ENCODE measurements at regions of chr17 and their contacts with region 1.

Region 1: DNA sequence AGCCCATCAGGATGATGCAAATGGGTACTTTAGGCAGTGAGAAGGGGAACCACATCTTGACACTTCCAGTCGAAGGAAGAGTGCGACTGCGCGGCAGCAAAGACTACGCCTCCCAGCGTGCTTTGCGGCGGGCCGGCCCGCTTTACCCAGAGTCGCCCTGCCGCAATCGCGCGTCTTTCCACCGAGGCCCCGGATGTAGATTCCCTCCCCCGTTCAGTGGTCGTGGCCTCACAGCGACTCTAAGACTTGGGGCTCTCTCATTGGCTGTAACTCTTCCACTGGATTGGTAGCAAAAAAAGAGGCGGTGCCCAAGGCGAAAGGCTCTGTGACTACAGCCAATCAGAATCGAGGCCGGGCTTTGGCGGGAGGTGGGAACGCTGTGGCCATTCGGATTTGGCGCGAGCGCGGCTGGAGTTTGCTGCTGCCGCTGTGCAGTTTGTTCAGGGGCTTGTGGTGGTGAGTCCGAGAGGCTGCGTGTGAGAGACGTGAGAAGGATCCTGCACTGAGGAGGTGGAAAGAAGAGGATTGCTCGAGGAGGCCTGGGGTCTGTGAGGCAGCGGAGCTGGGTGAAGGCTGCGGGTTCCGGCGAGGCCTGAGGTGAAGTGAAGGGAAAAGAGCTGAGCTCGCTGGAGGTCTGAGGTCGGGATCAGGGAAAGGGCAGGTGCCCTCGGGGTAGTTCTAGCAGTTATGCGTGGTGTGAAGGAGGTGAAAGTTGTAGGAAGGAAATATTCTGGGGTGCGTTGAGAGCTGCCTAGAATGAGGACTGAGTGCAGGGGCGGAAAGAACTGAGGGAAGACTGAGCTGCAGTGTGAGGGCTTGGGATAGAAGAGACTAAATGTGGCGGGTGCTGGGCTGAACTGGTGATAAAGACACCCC is at the start of gene CDC6:
- DNase-seq: peak; percentile 100
- H3K4me3 Mint-ChIP-seq: peak within 1 kb of the TSS; percentile 83
- H3K27ac Mint-ChIP-seq: peak within 1 kb of the TSS; percentile 90
- H3K4me1 Mint-ChIP-seq: peaks cover 71% of the 10 kb centered on the region
- H3K27me3 Mint-ChIP-seq: no peaks in the 10 kb centered on the region
- CTCF ChIP-seq: no peak
- total RNA-seq, gene CDC6: 567 and 645 TPM in 2 replicates

Region 2: GRCh38 chr17:39687811-39688518 is 599.8 kb before region 1 on chr17 and contains the start of gene PGAP3:
- CTCF ChIA-PET with region 1: interaction called, 3 read pairs
- intact Hi-C with region 1: loop called (anchors 5 kb)
- DNase-seq: peak; percentile 100
- H3K4me3 Mint-ChIP-seq: peak within 1 kb of the TSS; percentile 64
- H3K27ac Mint-ChIP-seq: peak within 1 kb of the TSS; percentile 63
- H3K4me1 Mint-ChIP-seq: peaks cover 27% of the 10 kb centered on the region
- H3K27me3 Mint-ChIP-seq: no peaks in the 10 kb centered on the region
- CTCF ChIP-seq: no peak
- total RNA-seq, gene PGAP3: 1,186 and 1,276 TPM in 2 replicates

Region 3: DNA sequence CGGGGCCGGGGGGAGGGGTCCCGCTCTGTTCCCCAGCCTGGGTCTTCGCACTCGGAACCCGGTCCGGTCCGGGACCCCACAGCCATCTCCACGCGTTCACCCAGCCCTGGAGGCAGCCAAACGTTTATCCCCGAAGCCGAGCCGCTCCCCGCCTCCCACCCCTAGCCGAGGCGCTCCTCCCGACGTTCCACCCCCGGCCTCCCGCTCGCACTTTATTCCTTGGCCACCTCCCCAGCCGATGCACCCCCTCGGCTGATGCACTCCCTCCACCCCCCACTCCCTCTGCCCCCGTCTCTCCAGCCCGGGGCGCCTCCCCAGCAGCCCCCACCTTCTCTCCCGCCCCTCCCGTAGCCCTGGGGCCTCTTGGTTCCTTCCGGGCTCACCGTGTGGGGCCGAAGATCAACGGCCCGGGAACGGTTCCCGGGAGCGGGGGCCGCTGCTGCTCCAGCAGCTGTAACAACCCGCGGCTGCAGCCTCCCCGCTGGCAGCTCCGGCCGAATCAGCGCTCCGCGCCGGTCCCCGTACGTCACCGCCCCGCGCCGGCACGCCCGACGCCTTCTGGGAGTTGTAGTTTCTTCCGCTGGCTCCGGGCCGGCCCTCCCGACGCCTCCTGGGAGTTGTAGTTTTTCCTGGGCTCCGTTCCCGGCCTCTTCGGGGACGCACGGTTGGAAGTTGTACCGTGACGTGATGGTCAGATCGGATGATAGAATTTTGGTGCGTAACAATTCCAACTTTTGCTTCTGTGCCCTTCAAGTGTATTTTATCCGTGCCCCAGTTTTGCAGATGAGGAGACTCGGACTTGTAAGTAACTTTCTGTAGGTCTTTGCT is 360.4 kb before region 1 on chr17 and contains the starts of genes LRRC3C and ORMDL3:
- CTCF ChIA-PET with region 1: interaction called, 8 read pairs
- intact Hi-C with region 1: loop called (anchors 10 kb)
- DNase-seq: no peak
- H3K4me3 Mint-ChIP-seq: peak within 1 kb of the TSS; percentile 74
- H3K27ac Mint-ChIP-seq: peak within 1 kb of the TSS; percentile 66
- H3K4me1 Mint-ChIP-seq: peaks cover 60% of the 10 kb centered on the region
- H3K27me3 Mint-ChIP-seq: no peaks in the 10 kb centered on the region
- CTCF ChIP-seq: no peak
- total RNA-seq, gene LRRC3C: not detected in 2 replicates
- total RNA-seq, gene ORMDL3: 1,738 and 1,968 TPM in 2 replicates

Region 4: DNA sequence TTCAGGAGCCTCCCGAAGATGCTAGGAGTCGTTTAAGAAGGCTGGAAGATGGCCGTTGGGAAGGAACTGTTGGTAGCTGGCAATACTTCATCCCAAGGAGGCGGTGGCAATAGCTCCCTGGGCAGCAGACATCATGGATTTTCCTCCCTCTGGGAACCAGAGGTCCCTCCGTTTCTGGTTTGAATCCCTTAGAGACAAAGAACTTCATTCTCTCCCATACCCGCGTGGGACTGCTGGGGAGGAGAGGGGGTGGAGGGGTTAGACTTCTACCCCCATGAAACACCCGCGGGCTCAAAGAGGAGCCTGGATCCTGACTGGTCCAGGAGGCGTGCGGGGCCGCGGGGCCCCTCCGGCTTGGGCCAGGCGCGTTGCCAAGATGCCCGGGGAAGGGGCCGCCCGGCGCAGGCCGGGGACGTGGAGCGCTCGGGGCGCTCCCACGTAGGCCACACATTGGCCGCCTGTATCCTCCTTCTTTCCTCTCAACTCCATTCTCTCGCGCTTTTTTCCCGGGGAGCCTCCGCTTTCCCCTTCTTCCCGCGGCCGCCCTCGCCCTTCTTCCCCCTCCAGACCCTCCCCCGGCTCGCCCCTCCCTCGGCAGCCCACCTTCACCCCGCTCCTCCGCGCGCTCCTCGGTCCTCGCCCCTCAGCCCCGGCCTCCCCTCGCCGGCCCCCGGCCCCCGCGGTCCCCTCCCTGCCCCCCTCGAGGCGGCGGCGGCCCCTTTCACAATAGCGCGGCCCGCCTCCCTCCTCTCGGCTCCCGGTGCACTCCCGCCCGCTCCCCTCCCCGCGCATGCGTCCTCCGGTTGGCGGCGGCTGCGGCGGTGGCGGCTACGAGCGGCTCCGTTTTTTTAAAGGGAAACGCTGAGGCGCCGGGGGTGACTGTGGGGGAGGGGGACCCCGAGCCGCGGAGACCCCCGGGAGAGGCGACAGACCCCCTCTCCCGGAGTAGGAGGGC is 166.3 kb before region 1 on chr17 and contains the start of gene MSL1:
- CTCF ChIA-PET with region 1: interaction called, 14 read pairs
- intact Hi-C with region 1: no loop called
- DNase-seq: peak; percentile 100
- H3K4me3 Mint-ChIP-seq: peak within 1 kb of the TSS; percentile 86
- H3K27ac Mint-ChIP-seq: peak within 1 kb of the TSS; percentile 53
- H3K4me1 Mint-ChIP-seq: peaks cover 48% of the 10 kb centered on the region
- H3K27me3 Mint-ChIP-seq: no peaks in the 10 kb centered on the region
- CTCF ChIP-seq: no peak
- total RNA-seq, gene MSL1: 505 and 524 TPM in 2 replicates

Region 5: GRCh38 chr17:40209404-40210093 is 78.2 kb before region 1 on chr17:
- CTCF ChIA-PET with region 1: interaction called, 31 read pairs
- intact Hi-C with region 1: no loop called
- DNase-seq: no peak
- H3K4me3 Mint-ChIP-seq: no peak overlapping the region
- H3K27ac Mint-ChIP-seq: no peak overlapping the region
- H3K4me1 Mint-ChIP-seq: no peaks in the 10 kb centered on the region
- H3K27me3 Mint-ChIP-seq: no peaks in the 10 kb centered on the region
- CTCF ChIP-seq: no peak

Region 6: GRCh38 chr17:40264458-40265185 is 23.1 kb before region 1 on chr17:
- CTCF ChIA-PET with region 1: interaction called, 142 read pairs
- intact Hi-C with region 1: loop called (anchors 1 kb)
- DNase-seq: no peak
- H3K4me3 Mint-ChIP-seq: no peak overlapping the region
- H3K27ac Mint-ChIP-seq: no peak overlapping the region
- H3K4me1 Mint-ChIP-seq: no peaks in the 10 kb centered on the region
- H3K27me3 Mint-ChIP-seq: no peaks in the 10 kb centered on the region
- CTCF ChIP-seq: no peak

Region 7: DNA sequence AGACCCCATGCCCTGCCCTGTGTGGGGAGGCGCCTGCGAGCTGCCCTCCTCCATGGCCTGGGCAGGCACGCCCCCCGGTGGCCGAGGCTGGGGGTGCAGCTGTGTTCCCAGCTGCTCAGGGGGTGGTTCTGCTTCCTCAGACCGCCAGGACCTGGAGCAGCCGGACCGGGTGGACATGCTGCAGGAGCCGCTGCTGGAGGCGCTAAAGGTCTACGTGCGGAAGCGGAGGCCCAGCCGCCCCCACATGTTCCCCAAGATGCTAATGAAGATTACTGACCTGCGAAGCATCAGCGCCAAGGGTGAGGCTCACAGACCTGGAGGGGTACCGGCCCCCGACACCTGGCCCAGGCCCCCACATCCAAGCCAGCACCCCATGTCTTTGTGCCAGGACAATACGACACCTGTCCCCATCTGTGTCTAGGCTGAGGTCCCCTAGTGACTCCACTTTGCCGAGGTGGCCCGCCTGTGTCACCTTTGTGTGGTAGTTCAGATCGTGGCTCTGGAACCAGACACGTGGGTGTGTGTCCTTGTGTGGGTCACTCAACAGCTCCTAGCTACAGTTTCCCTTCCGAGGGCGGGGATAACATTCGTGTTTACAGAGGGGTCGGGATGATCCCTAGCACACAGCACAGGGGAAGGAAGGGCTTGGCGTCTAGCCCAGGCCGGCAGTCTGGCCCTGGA is 67.5 kb after region 1 on chr17:
- CTCF ChIA-PET with region 1: interaction called, 19 read pairs
- intact Hi-C with region 1: no loop called
- DNase-seq: peak; percentile 100
- H3K4me3 Mint-ChIP-seq: no peak overlapping the region
- H3K27ac Mint-ChIP-seq: no peak overlapping the region
- H3K4me1 Mint-ChIP-seq: peaks cover 29% of the 10 kb centered on the region
- H3K27me3 Mint-ChIP-seq: no peaks in the 10 kb centered on the region
- CTCF ChIP-seq: no peak

Region 8: GRCh38 chr17:40469805-40470675 is 182.3 kb after region 1 on chr17:
- CTCF ChIA-PET with region 1: no interaction called
- intact Hi-C with region 1: no loop called
- DNase-seq: no peak
- H3K4me3 Mint-ChIP-seq: no peak overlapping the region
- H3K27ac Mint-ChIP-seq: no peak overlapping the region
- H3K4me1 Mint-ChIP-seq: no peaks in the 10 kb centered on the region
- H3K27me3 Mint-ChIP-seq: peaks cover 93% of the 10 kb centered on the region
- CTCF ChIP-seq: no peak

Region 9: GRCh38 chr17:40862985-40863733 is 575.4 kb after region 1 on chr17:
- CTCF ChIA-PET with region 1: no interaction called
- intact Hi-C with region 1: no loop called
- DNase-seq: no peak
- H3K4me3 Mint-ChIP-seq: no peak overlapping the region
- H3K27ac Mint-ChIP-seq: no peak overlapping the region
- H3K4me1 Mint-ChIP-seq: peaks cover 25% of the 10 kb centered on the region
- H3K27me3 Mint-ChIP-seq: no peaks in the 10 kb centered on the region
- CTCF ChIP-seq: no peak

Measured in Calu3 (cell line).